GM18951 (cell line): ENCODE measurements at regions of chr20 and their contacts with region 1.

Region 1: GRCh38 chr20:4607287-4607713 is 114.4 kb upstream of the PRND start:
- POLR2A ChIP-seq: no peak

Region 2: GRCh38 chr20:4435225-4435624 is 172.1 kb before region 1 on chr20:
- in situ Hi-C with region 1: no loop called
- POLR2A ChIP-seq: no peak

Region 3: DNA sequence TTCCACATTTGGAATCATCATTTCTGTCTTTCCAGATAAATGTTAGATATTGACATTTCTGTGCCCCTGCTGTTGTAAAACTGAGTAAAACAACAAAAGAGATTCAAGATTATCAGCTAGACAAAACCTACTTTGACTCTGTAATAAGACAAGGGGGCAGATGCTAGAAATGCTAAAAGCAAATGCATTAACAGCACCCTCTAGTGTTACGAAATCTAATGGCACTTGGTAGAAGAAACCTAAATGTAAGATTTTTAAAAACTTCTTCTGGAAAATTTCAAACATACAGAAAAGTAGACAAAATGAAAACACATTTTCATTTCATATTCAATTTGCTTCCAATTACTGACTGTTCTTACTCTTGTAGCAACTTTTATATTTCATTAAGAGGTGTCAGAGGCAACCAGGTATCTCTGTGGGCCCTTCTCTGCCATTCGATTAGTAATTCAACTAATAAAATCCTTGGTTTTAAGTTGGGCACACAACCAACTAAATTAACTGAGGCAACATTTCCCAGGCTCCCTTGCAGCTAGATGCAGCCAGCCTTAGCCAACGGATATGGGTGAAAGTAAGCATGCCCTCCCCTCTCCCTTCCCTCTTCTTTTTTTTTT is 349.0 kb after region 1 on chr20:
- in situ Hi-C with region 1: loop called (anchors 25 kb)
- POLR2A ChIP-seq: no peak

Region 4: GRCh38 chr20:5056801-5057599 is 449.7 kb after region 1 on chr20:
- in situ Hi-C with region 1: no loop called
- POLR2A ChIP-seq: no peak